ENCODE measurements at regions of chr12 and their contacts with region 1.

Region 1: DNA sequence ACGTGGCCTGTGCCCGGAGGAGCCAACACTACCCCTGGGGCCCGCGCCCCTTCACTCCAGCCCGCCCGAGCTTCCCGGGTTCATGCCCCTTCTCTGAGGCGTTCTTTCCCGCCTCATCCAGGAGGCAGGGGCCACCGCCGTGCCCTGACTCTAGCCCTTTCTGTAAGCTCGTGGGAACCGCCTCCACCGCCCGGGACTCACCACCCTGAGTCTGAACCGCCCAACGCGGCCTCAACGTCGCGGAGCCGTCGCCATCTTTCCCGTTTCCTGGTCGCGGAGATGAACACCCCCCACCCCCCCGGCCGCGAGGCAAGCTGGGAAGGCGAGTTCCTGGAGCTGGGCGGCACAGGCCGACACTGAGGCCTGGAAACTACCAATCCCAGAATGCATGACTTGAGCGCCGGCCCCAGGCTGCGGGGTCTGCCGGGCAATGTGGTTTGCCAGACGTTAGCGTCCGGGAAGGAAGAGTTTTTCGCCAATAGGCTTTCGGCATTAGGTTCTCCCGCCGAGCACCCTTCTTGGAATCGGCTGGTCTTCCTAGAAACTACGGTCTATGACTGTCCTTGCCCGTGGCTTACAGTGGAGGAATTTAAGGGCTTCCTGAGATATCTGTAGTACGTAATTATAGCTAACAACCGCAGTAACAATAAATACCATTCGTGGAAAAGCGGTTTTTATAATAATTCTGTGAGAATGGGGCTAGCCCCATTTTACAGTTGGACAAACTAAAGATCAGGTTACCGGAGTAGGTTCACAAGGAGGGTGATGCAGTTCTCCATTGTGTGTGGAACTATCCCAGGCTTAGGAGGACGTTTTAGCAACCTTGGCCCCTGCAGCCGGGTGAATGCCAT is at the start of gene DDX23:
- DNase-seq: peak; percentile 97

Region 2: GRCh38 chr12:48681738-48682532 is 170.2 kb before region 1 on chr12 and contains the start of gene KANSL2:
- CTCF ChIA-PET with region 1: no interaction called
- POLR2A ChIA-PET with region 1: no interaction called
- DNase-seq: peak; percentile 96

Region 3: DNA sequence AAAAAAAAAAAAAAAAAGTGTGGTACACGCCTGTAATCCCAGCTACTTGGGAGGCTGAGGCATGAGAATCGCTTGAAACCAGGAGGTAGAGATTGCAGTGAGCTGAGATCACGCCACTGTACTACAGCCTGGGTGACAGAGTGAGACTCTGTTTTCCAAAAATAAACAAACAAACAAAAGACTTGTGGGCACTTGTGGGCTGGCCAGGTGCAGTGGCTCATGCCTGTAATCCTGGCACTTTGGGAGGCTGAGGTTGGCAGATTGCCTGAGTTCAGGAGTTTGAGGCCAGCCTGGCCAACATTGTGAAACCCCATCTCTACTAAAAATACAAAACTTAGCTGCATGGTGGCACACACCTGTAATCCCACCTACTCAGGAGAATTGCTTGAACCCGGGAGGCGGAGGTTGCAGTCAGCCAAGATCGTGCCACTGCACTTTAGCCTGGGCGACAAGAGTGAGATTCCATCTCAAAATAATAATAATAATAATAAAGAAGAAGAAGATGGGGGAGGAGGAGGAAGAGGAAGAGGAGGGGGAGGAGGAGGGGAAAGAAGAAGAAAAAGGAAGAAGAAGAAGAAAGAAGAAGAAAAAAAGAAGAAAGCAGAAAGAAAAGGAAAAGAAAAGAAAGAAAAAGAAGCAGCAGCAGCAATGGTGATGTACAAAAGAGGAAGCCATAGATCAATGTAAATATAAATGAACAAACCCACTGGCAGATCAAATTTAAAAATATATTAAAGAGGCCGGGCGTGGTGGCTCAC is 107.7 kb before region 1 on chr12:
- CTCF ChIA-PET with region 1: no interaction called
- POLR2A ChIA-PET with region 1: no interaction called
- DNase-seq: no peak

Region 4: DNA sequence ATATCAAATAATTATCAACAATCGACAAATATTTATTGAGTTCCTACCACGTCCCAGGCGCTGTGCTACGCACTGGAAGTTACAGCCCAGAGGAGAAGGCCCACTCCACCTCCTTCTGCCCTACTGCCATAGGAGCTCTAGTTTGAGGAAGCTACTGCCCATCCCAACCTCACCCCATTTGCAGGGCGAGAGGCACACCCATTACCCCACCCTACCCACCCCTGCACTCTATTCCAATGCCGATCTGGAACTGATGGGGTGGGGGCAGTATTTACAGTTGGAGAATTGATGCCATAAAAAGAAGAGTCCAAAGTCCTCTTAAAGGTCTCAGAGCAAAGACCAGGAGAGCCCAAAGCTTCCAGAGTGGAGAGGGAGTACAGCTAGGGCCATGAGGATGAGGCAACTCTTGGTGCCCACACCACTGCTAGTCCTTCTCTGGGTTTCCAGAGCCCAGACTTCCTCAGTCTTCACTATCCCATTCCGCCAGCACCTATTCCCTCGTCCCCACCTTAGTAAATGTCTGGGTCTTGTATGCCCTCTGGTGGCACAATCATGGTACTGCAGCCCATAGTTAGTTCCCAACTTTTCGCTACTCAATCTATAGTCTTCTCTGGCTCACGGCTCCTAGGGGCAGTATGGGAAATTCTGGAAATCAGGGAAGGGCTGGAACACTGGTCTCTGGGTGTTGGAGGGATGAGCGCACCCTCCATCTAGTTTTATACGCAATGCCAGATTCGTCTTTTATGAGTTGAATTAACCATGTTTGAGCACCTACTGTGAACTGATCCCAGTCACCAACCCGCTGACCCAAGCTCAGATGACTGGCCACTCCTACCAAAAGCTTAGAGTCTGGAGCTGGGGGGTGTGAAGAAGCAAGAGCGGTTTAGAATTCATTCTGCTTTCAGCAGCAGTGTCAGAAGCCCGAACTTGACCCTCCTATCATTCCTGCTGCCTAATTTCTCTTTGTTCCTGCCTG is 56.3 kb before region 1 on chr12:
- CTCF ChIA-PET with region 1: no interaction called
- POLR2A ChIA-PET with region 1: no interaction called
- DNase-seq: peak; percentile 85

Region 5: DNA sequence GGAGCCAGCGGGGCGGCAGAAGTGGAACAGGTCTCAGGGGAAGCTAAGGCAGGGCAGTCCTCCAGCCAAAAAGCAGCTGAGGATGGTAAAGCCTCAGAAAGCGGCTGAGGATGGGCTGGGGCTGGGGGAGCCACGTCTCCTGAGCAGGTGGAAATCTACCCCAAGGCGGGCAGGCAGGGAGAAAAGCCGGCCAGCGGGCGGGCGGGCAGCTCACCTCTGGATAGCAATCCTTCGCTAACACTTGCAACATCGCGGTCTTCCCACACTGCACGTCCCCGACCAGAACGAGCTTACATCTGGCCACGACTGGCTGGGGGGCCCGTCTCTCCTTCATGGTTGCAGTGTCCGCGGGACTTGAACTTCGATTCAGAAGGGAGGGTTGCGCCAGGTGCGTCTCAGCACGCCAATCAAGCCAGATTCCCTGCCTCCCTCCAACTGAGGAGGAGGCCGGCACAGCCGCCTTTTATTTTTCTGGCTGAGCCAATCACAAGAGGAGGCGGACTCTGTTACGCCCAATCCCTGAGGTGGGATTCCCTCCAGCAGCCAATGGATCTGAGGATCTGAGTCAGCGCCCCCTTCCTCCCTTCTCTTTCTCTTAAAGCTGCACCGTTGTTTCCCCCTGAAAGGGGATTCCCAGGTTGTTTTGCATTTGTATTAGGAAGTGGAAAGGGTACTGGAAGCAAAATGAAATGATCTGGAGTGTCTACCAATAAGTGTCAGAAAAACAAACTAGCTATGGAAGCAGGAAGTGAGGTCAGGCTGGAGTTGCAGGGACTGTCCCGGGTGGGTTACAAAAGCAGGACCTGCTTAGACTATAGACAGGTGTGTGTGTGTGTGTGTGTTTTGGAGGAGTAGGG is 13.6 kb after region 1 on chr12 and contains the start of gene RND1:
- CTCF ChIA-PET with region 1: interaction called, 19 read pairs
- POLR2A ChIA-PET with region 1: interaction called, 29 read pairs
- DNase-seq: peak; percentile 95

Region 6: GRCh38 chr12:48873096-48873495 is 21.0 kb after region 1 on chr12:
- CTCF ChIA-PET with region 1: interaction called, 12 read pairs
- POLR2A ChIA-PET with region 1: interaction called, 5 read pairs
- DNase-seq: no peak

Region 7: DNA sequence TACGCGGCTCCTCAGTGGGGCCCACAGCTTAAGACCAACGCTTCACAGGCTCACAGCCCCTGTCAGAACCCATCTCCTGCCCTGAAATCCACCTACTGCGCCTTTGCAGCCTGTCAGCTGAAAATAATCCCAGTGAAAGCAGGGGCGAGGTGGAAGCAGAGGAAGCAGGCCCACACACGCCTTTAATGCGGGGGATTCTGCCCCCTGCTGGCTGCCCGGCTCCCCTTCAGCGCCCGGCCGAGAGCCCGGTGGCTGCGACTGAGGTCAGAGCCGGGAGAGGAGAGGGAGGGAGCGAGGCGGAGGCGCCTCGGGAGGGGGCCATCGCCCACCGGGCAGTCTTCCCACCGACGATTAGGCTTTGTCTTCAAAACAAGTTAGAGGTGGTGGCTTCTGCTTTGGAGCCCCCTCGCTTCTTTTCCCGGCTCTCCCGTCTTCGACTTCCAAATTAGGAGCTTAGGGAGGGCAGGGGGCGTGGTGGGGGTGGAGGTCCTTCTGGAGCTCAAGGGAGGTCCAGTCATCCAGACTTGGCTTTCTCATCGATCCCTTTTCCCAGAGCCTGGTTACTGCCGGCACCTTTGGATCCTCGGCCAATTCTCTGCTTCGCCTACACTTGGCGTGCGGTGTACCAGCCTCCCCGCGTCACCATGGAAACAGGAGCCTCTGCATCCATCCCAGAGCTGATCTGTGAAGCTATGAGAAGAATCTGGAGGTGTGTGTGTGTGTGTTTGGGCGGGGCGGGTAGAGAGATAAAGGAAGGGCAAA is 38.7 kb after region 1 on chr12:
- CTCF ChIA-PET with region 1: interaction called, 68 read pairs
- POLR2A ChIA-PET with region 1: interaction called, 62 read pairs
- DNase-seq: peak; percentile 85

Region 8: DNA sequence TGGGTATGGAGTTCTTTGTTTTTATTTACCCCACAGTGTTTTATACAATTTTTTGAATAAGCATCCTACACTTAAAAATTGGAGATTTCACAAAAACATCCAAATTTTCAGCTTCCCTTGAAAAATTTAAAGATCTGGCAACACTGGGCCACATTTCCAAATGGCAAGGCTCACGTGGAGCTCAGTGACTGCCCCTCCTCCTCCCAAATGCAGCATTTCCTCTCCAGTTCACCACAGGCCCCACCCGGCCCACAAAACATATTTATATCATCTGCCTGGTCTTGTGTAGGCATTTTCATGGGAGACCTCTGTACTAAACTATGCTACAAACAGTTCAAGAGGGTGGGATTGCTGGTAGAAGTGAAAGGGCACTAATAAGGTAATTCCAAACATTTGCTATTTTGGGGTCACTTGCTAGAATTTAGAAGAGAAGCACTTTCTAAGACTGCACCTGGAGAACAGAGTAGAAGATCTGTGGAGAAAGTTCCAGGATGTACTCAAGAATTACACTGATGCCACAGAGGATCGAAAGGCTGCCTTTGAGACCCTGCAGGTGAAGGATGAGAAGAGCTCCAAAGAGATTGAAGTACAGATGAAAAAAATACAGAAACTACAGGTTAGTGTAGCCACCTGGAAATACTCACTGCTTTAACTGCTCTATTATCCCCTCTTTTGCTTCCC is 65.9 kb after region 1 on chr12:
- CTCF ChIA-PET with region 1: interaction called, 11 read pairs
- POLR2A ChIA-PET with region 1: no interaction called
- DNase-seq: no peak

Region 9: GRCh38 chr12:48936379-48936979 is 84.4 kb after region 1 on chr12:
- CTCF ChIA-PET with region 1: interaction called, 16 read pairs
- POLR2A ChIA-PET with region 1: interaction called, 3 read pairs
- DNase-seq: peak; percentile 90

Measured in HEK293T (cell line).